ENCODE measurements at regions of chr1 and their contacts with region 1.

Region 1: GRCh38 chr1:205977402-205978014 is 25.7 kb downstream of the RAB7B start:
- DNase-seq: peak; percentile 70 to 81
- ATAC-seq: peak; percentile 85 to 97
- H3K4me3 ChIP-seq: no peak overlapping the region
- H3K27ac ChIP-seq: peak overlapping the region; percentile 59 to 77; a peak in 4 of 6 replicates
- H3K4me1 ChIP-seq: peaks cover 16% of the 10 kb centered on the region
- CTCF ChIP-seq: peak; percentile 98
- EP300 ChIP-seq: no peak
- POLR2A ChIP-seq: no peak
- RAD21 ChIP-seq: peak; percentile 99

Region 2: DNA sequence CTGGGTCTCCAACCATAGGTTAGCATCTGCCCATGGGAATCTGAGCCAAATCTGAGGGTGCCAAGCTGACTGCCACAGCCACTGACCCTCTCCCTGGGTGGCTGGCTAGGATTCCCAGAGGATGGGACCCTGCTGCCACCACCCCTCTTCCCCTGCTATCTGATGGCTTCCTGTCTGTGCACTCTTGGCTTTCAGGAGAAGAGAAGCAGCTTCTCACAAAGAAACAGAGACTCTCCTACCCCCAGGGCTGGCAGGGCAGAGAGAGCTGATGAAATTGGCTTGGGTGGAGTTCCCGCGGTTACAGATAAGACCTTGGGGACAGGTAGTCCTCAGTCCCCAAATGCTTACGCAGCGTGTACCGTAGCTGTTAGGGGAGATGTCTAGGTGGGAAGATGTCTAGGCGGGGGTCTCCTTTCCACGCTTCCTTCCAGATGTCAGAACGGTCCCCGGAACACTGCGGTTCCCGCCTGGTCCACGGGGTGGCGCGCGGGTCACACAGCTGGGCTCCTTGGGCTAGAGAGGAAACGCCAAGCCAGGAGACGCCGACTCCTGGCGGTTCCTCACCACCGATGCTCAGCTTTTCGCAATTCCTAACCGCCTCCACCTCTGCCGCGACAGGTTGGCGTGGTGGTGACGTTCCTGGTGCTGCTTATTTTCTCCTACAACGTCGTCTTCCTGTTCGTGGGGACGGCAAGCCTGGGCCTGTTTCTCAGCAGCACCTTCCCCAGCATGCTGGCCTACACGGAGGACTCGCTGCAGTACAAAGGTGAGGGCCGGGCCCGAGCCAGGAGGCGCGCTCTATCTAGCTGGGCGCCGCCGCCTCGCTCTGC is 385.8 kb before region 1 on chr1:
- CTCF ChIA-PET with region 1: interaction called, 14 read pairs
- POLR2A ChIA-PET with region 1: no interaction called
- DNase-seq: peak; percentile 81 to 89
- ATAC-seq: peak; percentile 92
- H3K4me3 ChIP-seq: peak overlapping the region; percentile 37
- H3K27ac ChIP-seq: peak overlapping the region; percentile 64 to 72
- H3K4me1 ChIP-seq: peaks cover 3% of the 10 kb centered on the region; the same call in 1 of the 3 replicates
- CTCF ChIP-seq: peak; percentile 95
- EP300 ChIP-seq: no peak
- POLR2A ChIP-seq: no peak
- RAD21 ChIP-seq: peak; percentile 97 to 98

Region 3: DNA sequence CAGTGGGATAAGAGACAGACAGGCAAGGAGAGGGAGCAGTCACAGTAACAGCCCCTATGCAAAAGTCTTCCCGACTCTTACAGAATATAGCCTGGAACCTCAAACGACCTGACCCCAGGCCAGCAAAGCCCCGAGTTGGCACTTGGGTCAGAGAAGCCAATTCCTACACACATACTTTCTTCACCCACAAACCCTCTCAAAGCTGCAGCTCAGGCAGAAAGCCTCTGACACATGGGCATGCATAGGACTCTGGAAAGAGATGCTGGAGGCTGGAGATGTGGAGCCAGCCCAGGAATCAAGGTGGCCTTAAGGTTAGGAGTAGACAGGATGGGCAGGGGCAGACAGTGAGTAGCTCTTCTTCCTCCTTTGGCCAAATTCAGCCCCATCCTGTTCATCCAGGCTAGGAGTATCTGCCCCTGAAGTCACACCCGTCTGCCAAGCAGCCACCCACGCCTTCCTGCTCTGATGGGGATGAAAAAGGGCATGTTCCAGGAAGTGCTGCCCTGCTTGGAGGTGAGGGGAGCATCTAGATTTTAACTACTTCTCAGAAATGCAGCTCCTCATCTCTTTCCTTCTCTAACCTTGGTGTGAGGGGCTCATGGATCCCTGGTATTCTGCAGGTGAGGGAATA is 172.3 kb before region 1 on chr1:
- CTCF ChIA-PET with region 1: interaction called, 371 read pairs
- POLR2A ChIA-PET with region 1: no interaction called
- DNase-seq: no peak
- ATAC-seq: no peak; a peak in 1 of 6 replicates
- H3K4me3 ChIP-seq: no peak overlapping the region
- H3K27ac ChIP-seq: no peak overlapping the region
- H3K4me1 ChIP-seq: no peaks in the 10 kb centered on the region
- CTCF ChIP-seq: no peak
- EP300 ChIP-seq: no peak
- POLR2A ChIP-seq: no peak
- RAD21 ChIP-seq: no peak

Region 4: DNA sequence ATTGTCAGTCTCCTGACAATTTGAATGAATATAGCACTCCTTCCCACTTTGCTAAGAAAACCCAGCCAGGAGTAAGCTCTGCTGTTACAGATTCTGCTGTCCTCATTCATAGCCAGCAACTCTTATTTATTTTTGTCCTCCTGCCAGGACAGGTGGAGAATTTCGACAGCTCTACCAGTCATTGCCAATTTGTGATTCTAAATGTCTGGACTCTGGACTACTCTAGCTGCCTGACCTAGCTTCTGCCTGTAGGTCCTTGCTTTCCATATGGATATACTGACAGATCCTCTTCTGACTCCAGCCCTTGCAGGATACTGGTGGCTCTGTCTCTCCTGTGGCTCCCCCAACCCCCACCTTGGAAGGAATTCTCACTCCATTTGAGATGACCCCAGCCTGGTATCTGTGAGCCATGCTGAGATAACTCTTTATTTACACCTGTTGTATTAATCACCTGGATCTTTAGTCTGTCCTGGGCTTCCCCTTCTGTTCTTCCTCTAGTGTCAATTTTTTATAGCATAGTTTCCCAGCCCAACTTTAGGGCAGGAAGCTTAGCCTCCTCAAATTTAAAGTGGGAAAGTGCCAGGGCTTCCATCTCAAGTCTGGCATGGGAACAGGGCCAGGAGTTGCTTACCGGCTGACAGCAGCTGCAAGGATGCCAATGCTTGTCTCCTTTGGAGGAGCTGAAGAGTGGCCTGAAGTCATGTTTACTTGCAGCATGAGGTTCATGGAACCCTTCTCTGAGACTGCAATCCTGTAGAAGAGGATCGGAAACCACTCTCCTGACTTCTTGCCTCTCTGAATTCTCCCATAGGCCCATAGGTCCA is 134.3 kb before region 1 on chr1:
- CTCF ChIA-PET with region 1: interaction called, 16 read pairs
- POLR2A ChIA-PET with region 1: no interaction called
- DNase-seq: no peak
- ATAC-seq: no peak
- H3K4me3 ChIP-seq: no peak overlapping the region
- H3K27ac ChIP-seq: no peak overlapping the region
- H3K4me1 ChIP-seq: peaks cover 3% of the 10 kb centered on the region; the same call in 1 of the 3 replicates
- CTCF ChIP-seq: no peak
- EP300 ChIP-seq: no peak
- POLR2A ChIP-seq: no peak
- RAD21 ChIP-seq: no peak

Region 5: DNA sequence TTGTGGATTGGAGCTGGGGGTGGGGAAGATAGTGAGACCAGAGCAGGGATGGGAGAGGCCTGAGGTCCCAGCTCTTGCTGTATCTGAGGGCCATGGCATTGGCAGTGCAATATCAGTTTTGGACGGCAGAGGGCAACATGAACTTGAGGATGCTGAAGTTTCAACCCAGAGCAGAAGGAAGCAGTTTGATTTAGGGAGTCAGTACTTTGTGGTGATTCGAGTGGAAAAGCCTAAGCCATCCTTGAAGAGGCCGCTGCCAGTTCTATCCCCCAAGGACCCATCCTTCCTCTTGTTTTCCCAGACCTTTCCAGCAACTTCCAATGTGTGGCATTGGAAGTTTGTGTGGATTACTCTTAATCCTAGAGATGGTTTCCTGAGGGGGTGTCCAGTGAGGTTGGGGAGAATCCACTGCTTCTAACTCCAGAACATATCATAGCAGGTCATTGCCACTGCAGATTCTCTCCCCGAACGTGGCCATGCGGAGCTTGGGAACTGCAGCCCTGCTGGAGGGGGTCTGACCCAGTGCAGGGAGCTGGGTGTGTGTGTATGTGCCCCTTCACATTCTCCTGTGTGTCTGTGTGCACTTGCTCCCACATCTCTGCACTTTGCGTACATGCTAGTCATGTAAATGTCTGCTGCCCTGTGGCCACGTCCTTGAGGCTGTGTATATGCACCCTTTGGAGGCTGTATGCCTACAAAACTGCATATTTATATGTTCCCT is 58.3 kb before region 1 on chr1:
- CTCF ChIA-PET with region 1: interaction called, 822 read pairs
- POLR2A ChIA-PET with region 1: interaction called, 11 read pairs
- DNase-seq: peak; percentile 85 to 86
- ATAC-seq: peak; percentile 94 to 96
- H3K4me3 ChIP-seq: no peak overlapping the region
- H3K27ac ChIP-seq: peak overlapping the region; percentile 48 to 71; a peak in 4 of 6 replicates
- H3K4me1 ChIP-seq: peaks cover 8% of the 10 kb centered on the region
- CTCF ChIP-seq: peak; percentile 93
- EP300 ChIP-seq: no peak
- POLR2A ChIP-seq: no peak
- RAD21 ChIP-seq: peak; percentile 98 to 99

Region 6: DNA sequence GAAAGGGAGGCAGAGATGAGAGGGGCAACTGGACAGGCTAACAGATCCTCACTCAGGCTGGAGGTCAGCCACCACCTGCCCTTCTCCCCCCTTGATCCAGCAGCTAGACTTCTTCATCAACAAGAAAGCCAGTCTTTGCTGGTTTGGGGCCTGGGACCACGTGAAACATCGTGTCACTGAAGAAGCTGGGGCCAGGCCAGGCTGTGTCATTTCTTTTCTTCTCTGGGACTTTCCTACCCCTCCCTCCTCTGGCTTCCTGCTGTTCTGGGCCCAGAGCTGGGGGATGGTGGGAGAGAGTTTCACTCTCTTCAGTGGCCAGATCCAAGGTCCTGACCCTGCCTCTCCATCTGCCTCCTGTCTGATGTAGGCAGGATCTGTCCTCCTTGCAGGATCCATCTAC is 16.1 kb before region 1 on chr1:
- CTCF ChIA-PET with region 1: interaction called, 84 read pairs
- POLR2A ChIA-PET with region 1: no interaction called
- DNase-seq: no peak
- ATAC-seq: no peak; a peak in 1 of 6 replicates
- H3K4me3 ChIP-seq: no peak overlapping the region
- H3K27ac ChIP-seq: 0 out of 6 replicates have a peak overlapping the region, but pooled peaks of 1 of the 2 experiments have one; percentile 1
- H3K4me1 ChIP-seq: no peaks in the 10 kb centered on the region
- CTCF ChIP-seq: no peak
- EP300 ChIP-seq: no peak
- POLR2A ChIP-seq: no peak
- RAD21 ChIP-seq: no peak

Region 7: DNA sequence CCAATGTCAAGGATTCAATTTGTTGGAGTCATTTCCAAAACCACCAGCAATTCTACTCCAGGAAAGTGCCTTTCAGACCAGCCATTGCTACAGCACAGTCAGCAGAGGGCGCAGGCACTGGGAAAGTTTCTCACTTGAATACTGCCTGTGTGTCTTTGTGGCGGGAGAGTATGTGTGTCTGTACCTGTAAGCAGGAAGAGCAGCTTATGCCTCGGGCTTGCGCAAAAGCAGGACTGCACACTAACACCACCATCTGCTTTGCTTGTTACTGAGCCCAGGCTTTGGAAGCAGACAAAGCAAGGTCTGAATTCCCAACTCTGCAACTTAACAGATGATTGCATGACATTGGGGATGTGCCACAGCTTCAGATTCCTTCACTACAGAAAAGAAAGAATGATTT is 53.2 kb after region 1 on chr1:
- CTCF ChIA-PET with region 1: interaction called, 47 read pairs
- POLR2A ChIA-PET with region 1: no interaction called
- DNase-seq: peak; percentile 58 to 83
- ATAC-seq: peak; percentile 96 to 99
- H3K4me3 ChIP-seq: no peak overlapping the region
- H3K27ac ChIP-seq: no peak overlapping the region
- H3K4me1 ChIP-seq: peaks cover 3% of the 10 kb centered on the region; the same call in 1 of the 3 replicates
- CTCF ChIP-seq: peak; percentile 85
- EP300 ChIP-seq: no peak
- POLR2A ChIP-seq: no peak
- RAD21 ChIP-seq: peak; percentile 70 to 71